PC-3 (cell line): ENCODE measurements at regions of chr20 and their contacts with region 1.

Region 1: GRCh38 chr20:10848810-10849370 is 175.1 kb upstream of the JAG1 start:
- DNase-seq: peak; percentile 95
- ATAC-seq: peak; percentile 92
- H3K4me3 ChIP-seq: no peak overlapping the region; the same call in 1 of the 2 replicates
- H3K27ac ChIP-seq: peak overlapping the region; percentile 86
- H3K4me1 ChIP-seq: peaks cover 16% of the 10 kb centered on the region
- H3K27me3 ChIP-seq: no peaks in the 10 kb centered on the region
- CTCF ChIP-seq: no peak

Region 2: DNA sequence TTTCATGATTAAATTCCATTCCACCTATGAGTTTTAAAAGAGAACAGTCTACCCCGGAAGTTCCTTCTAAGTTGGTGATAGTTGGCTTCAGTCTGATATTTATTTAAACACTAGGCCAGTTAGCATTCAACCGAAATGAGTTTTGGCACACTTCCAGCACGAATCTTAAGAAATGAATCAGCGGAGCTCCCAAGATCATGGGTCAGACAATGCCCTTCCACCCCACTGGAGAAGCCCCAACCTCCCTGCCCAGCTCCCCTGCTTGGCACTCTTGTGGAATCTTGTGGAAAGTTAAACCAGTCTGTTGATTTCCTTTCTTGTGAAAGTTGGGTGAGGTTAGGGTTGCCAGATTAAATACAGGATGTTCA is 479.2 kb before region 1 on chr20:
- CTCF ChIA-PET with region 1: no interaction called
- POLR2A ChIA-PET with region 1: no interaction called
- intact Hi-C with region 1: no loop called
- DNase-seq: peak; percentile 79
- ATAC-seq: no peak
- H3K4me3 ChIP-seq: no peak overlapping the region
- H3K27ac ChIP-seq: no peak overlapping the region
- H3K4me1 ChIP-seq: peaks cover 4% of the 10 kb centered on the region; the same call in 1 of the 2 replicates
- H3K27me3 ChIP-seq: peaks cover 21% of the 10 kb centered on the region; the same call in 1 of the 2 replicates
- CTCF ChIP-seq: no peak

Region 3: DNA sequence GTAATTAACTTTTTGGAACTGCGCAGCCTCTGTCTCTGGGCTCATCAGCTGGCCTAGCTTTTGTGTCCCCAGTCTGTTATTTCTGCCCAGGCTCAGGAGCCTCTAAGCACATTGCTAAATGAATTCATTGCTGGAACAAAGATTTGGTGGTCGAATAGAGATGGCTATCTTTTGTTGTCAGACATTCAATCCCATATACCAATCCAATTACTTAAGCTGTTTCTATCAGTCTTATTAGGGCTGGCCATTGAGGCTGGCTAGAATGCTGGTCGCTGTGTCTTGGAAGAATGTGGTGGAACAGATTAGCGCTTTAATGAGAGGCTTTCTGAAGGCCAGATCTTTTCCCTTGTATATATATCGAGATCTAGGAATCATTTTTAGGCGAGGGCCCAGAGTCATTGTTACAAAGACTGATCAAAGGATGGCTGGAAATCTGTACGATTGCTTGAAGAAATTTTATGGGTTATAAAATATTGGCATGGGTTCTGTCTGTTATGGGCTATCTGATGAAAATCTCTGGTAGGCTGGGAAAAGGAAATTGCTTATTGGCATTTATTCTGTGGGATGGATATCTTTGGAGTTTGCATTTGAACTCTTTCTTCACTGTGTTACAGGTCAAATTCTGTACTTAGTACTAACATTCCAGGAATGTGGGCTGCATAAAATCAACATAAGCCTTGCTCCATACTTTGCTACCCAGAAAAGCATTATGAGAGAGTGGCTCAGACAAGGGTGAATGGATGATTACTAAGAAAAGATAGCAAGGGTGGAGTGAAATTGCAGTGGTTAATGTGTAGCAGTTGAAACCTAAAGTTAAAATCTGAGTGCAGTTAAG is 140.3 kb before region 1 on chr20:
- CTCF ChIA-PET with region 1: no interaction called
- POLR2A ChIA-PET with region 1: no interaction called
- intact Hi-C with region 1: loop called (anchors 1 kb)
- DNase-seq: peak; percentile 92
- ATAC-seq: peak; percentile 30
- H3K4me3 ChIP-seq: no peak overlapping the region
- H3K27ac ChIP-seq: peak overlapping the region; percentile 79
- H3K4me1 ChIP-seq: peaks cover 52% of the 10 kb centered on the region
- H3K27me3 ChIP-seq: no peaks in the 10 kb centered on the region
- CTCF ChIP-seq: no peak